ENCODE measurements at regions of chr11 and their contacts with region 1.

Region 1: GRCh38 chr11:19561011-19561410 is 151.6 kb upstream of the NAV2 start:
- DNase-seq: no peak
- H3K4me3 ChIP-seq: no peak overlapping the region
- H3K27ac ChIP-seq: no peak overlapping the region
- H3K4me1 ChIP-seq: peaks cover 9 to 14% (median 10%) of the 10 kb centered on the region in 4 donors
- H3K27me3 ChIP-seq: no peaks in the 10 kb centered on the region
- CTCF ChIP-seq: no peak
- EP300 ChIP-seq: no peak
- POLR2A ChIP-seq: no peak

Region 2: DNA sequence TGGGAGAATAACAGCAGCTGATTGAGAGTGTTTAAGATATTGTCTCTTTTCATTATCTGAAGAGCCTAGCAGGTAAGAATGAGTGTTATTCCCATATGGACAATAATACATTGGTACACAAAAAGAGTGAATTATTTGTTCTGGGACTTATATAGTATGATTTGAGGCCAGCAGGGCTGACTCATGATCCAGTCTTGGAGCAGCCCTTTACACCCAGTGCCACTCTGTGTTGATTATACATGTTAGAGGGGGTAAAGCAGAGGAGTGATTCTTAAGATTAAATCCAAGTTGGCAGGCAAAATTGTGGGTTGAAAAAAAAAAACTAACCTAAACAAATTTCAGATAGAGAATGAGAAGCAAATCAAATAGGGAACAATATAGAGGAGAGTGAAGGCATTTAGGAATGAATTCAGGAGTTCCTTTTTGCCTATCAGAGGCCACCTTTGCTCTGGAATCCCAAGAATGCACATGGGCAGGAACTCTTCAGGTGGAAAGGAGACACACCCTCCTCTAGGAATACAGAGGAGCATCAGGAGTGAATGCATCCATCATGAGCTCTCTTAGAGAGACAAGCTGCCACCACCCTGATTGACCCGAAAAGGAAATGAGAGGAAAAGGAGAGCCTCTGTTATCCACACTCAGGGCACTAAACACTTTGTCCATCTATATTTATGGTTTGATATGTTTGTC is 602.6 kb before region 1 on chr11:
- intact Hi-C with region 1: no loop called
- DNase-seq: no peak
- H3K4me3 ChIP-seq: no peak overlapping the region
- H3K27ac ChIP-seq: no peak overlapping the region
- H3K4me1 ChIP-seq: no peaks in the 10 kb centered on the region
- H3K27me3 ChIP-seq: no peaks in the 10 kb centered on the region
- CTCF ChIP-seq: no peak
- EP300 ChIP-seq: no peak
- POLR2A ChIP-seq: no peak

Region 3: GRCh38 chr11:19683141-19683805 is 122.3 kb after region 1 on chr11:
- intact Hi-C with region 1: no loop called
- DNase-seq: no peak
- H3K4me3 ChIP-seq: no peak overlapping the region
- H3K27ac ChIP-seq: peak overlapping the region in 4 of 5 donors; percentile 24 to 87 (median 67)
- H3K4me1 ChIP-seq: peaks cover 6 to 38% (median 26%) of the 10 kb centered on the region in 4 donors
- H3K27me3 ChIP-seq: no peaks in the 10 kb centered on the region
- CTCF ChIP-seq: no peak
- EP300 ChIP-seq: peak; percentile 36
- POLR2A ChIP-seq: no peak

Region 4: GRCh38 chr11:19742588-19743292 is 181.7 kb after region 1 on chr11:
- intact Hi-C with region 1: loop called (anchors 5 kb)
- DNase-seq: peak; percentile 84 to 91
- H3K4me3 ChIP-seq: no peak overlapping the region
- H3K27ac ChIP-seq: peak overlapping the region in 1 of 5 donors; percentile 2
- H3K4me1 ChIP-seq: peaks cover 0 to 38% (median 11%) of the 10 kb centered on the region in 4 donors
- H3K27me3 ChIP-seq: no peaks in the 10 kb centered on the region
- CTCF ChIP-seq: peak in 5 of 7 experiments; percentile 80 to 95 (median 84)
- EP300 ChIP-seq: no peak
- POLR2A ChIP-seq: no peak

Region 5: GRCh38 chr11:19905274-19905853 is 344.4 kb after region 1 on chr11:
- intact Hi-C with region 1: loop called (anchors 5 kb)
- DNase-seq: peak in 1 of 2 donors; percentile 62
- H3K4me3 ChIP-seq: no peak overlapping the region
- H3K27ac ChIP-seq: no peak overlapping the region
- H3K4me1 ChIP-seq: peaks cover 0 to 24% (median 9%) of the 10 kb centered on the region in 4 donors
- H3K27me3 ChIP-seq: no peaks in the 10 kb centered on the region
- CTCF ChIP-seq: peak in 4 of 7 experiments; percentile 29 to 58 (median 48)
- EP300 ChIP-seq: no peak
- POLR2A ChIP-seq: no peak